ENCODE measurements at regions of chr3 and their contacts with region 1.

Region 1: GRCh38 chr3:185558395-185558794 is 6.0 kb upstream of the LIPH start:
- DNase-seq: peak; percentile 92
- H3K4me3 Mint-ChIP-seq: peak overlapping the region; percentile 72
- H3K27ac Mint-ChIP-seq: peak overlapping the region; percentile 100
- H3K4me1 Mint-ChIP-seq: peaks cover 52% of the 10 kb centered on the region
- H3K27me3 Mint-ChIP-seq: no peaks in the 10 kb centered on the region
- CTCF ChIP-seq: no peak

Region 2: GRCh38 chr3:185332026-185332735 is 226.2 kb before region 1 on chr3:
- CTCF ChIA-PET with region 1: no interaction called
- intact Hi-C with region 1: loop called (anchors 5 kb)
- DNase-seq: no peak
- H3K4me3 Mint-ChIP-seq: peak overlapping the region; percentile 73
- H3K27ac Mint-ChIP-seq: peak overlapping the region; percentile 95
- H3K4me1 Mint-ChIP-seq: peaks cover 77% of the 10 kb centered on the region
- H3K27me3 Mint-ChIP-seq: no peaks in the 10 kb centered on the region
- CTCF ChIP-seq: no peak

Region 3: GRCh38 chr3:185460719-185461350 is 97.6 kb before region 1 on chr3:
- CTCF ChIA-PET with region 1: interaction called, 11 read pairs
- intact Hi-C with region 1: no loop called
- DNase-seq: no peak
- H3K4me3 Mint-ChIP-seq: no peak overlapping the region
- H3K27ac Mint-ChIP-seq: no peak overlapping the region
- H3K4me1 Mint-ChIP-seq: no peaks in the 10 kb centered on the region
- H3K27me3 Mint-ChIP-seq: no peaks in the 10 kb centered on the region
- CTCF ChIP-seq: no peak

Region 4: DNA sequence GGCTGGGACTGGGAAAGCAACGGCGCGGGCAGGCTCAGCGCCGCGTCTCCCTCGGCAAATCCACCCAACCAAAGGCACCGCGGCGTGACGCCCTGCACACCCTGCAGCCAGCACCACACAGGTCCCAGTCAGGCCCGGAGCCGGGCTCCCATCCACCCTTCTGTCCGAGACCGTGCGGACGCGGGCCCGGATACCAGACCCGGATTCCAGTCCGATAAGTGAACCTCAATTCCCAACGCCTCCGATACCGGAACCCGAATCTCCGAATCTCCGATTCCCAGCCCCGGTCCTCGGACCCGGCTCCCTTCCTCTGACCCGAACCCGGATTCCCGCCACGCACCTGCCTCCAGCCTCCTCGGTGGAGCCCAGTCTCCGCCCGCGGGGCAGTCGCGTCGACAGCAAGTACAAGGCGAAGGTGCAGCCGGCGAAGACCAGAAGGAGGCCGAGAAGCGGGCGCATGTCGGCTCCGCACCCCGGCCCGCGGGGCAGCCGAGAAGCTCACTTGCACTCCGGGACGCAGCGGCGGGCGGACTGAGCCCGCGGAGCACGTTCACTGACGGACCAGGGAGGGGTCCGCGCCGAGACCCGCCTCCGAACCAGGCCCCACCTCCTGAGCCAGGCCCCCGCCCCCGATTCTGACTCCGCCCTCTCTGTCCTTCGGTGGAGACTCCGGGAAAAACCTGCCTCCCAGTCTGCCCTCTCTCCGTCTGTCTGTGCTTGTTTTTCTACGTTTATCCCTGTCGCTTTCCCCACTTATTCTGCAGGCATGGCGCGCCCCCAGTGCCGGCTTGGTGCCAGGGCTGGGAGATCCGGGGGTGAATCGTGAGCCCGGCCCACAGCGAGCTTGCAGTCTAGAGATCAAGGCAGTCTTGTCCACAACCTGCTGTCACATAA is 59.6 kb before region 1 on chr3 and contains the start of gene TMEM41A:
- CTCF ChIA-PET with region 1: interaction called, 6 read pairs
- intact Hi-C with region 1: loop called (anchors 5 kb)
- DNase-seq: peak; percentile 99
- H3K4me3 Mint-ChIP-seq: peak within 1 kb of the TSS; percentile 85
- H3K27ac Mint-ChIP-seq: peak within 1 kb of the TSS; percentile 89
- H3K4me1 Mint-ChIP-seq: peaks cover 32% of the 10 kb centered on the region
- H3K27me3 Mint-ChIP-seq: no peaks in the 10 kb centered on the region
- CTCF ChIP-seq: no peak
- total RNA-seq, gene TMEM41A: 53.6 and 57.5 TPM in 2 replicates

Region 5: GRCh38 chr3:185572183-185572582 is 13.8 kb after region 1 on chr3:
- CTCF ChIA-PET with region 1: interaction called, 17 read pairs
- intact Hi-C with region 1: no loop called
- DNase-seq: no peak
- H3K4me3 Mint-ChIP-seq: no peak overlapping the region
- H3K27ac Mint-ChIP-seq: no peak overlapping the region
- H3K4me1 Mint-ChIP-seq: peaks cover 17% of the 10 kb centered on the region
- H3K27me3 Mint-ChIP-seq: no peaks in the 10 kb centered on the region
- CTCF ChIP-seq: no peak

Region 6: DNA sequence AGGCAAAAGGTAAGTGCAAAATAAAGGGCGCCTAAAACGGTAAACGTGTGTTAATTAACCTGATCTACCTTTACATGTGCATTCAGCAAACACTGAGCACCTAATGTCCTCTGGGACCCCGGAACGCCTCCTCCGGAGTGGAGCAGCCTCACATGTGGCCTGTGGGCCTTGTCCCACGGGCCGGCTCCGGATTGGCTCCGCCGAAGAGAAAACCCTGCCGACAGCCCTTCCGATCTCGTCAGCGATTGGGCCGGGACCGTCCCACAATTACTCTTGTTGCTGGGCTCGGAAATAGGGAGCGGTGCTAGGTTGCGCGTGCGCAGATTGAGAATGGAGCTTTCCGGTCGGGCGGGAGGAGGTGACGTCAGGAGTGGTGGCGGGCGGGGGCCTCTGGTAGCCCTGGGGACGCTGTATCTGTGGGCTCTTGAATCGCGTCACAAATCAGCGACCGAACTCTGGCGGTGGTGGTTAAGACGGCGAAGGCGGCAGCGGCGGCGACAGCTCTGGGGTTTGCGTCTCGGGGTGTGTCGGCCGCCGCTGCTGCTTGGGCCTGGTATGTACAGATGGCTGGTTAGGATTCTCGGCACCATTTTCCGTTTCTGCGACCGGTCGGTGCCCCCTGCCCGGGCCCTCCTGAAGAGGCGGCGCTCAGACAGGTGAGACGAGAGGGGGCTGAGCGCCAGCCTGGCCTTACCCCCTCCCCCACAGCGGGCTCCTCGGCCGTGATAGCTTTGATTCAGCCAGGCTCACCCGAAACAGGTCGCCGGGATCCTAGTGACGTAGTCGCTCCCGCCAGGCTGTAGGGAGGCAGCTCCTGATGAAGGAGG is 27.7 kb after region 1 on chr3 and contains the start of gene SENP2:
- CTCF ChIA-PET with region 1: interaction called, 23 read pairs
- intact Hi-C with region 1: no loop called
- DNase-seq: peak; percentile 100
- H3K4me3 Mint-ChIP-seq: peak within 1 kb of the TSS; percentile 79
- H3K27ac Mint-ChIP-seq: peak within 1 kb of the TSS; percentile 89
- H3K4me1 Mint-ChIP-seq: peaks cover 26% of the 10 kb centered on the region
- H3K27me3 Mint-ChIP-seq: no peaks in the 10 kb centered on the region
- CTCF ChIP-seq: no peak
- total RNA-seq, gene SENP2: 75.1 and 87.1 TPM in 2 replicates